ENCODE measurements at regions of chr13 and their contacts with region 1.

Region 1: GRCh38 chr13:37127691-37128241 is 22.3 kb upstream of the CSNK1A1L start:
- DNase-seq: no peak
- H3K4me3 ChIP-seq: no peak overlapping the region
- H3K27ac ChIP-seq: peak overlapping the region; percentile 9 to 50 (median 40)
- H3K4me1 ChIP-seq: peaks cover 0 to 5% (median 0%) of the 10 kb centered on the region in 4 donors
- H3K27me3 ChIP-seq: no peaks in the 10 kb centered on the region
- CTCF ChIP-seq: no peak
- EP300 ChIP-seq: no peak
- POLR2A ChIP-seq: no peak

Region 2: GRCh38 chr13:36526897-36527296 is 600.9 kb before region 1 on chr13:
- in situ Hi-C with region 1: no loop called
- intact Hi-C with region 1: no loop called
- DNase-seq: no peak
- H3K4me3 ChIP-seq: no peak overlapping the region
- H3K27ac ChIP-seq: no peak overlapping the region
- H3K4me1 ChIP-seq: no peaks in the 10 kb centered on the region
- H3K27me3 ChIP-seq: no peaks in the 10 kb centered on the region
- CTCF ChIP-seq: no peak
- EP300 ChIP-seq: no peak
- POLR2A ChIP-seq: no peak

Region 3: GRCh38 chr13:37561031-37561430 is 433.3 kb after region 1 on chr13:
- in situ Hi-C with region 1: loop called in 1 of 4 experiments (anchors 25 kb)
- intact Hi-C with region 1: no loop called
- DNase-seq: no peak
- H3K4me3 ChIP-seq: no peak overlapping the region
- H3K27ac ChIP-seq: no peak overlapping the region
- H3K4me1 ChIP-seq: no peaks in the 10 kb centered on the region
- H3K27me3 ChIP-seq: no peaks in the 10 kb centered on the region
- CTCF ChIP-seq: no peak
- EP300 ChIP-seq: no peak
- POLR2A ChIP-seq: no peak

Measured in transverse colon (tissue), 4 donors.